SK-MEL-5 (cell line): ENCODE measurements at regions of chr6 and their contacts with region 1.

Region 1: DNA sequence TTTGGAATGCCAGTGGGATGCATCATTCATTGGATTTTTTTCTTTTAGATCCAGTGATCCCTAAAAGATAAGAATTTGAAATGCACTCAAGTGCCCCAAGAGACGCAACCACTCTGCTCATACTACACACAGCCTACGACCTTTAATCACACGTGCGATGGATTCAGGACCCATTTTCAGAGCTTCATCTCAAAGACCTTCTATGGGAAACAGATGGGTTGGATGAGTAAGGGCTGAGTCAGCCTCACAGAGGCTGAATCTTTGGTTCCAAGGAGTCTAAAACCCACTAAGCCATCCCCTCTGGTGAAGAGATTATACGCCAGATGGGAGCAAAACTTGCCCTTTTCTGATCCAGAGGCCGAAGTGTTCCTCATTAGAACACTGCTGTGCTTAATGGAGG is 265.6 kb upstream of the EXOC2 start:
- DNase-seq: no peak

Region 2: DNA sequence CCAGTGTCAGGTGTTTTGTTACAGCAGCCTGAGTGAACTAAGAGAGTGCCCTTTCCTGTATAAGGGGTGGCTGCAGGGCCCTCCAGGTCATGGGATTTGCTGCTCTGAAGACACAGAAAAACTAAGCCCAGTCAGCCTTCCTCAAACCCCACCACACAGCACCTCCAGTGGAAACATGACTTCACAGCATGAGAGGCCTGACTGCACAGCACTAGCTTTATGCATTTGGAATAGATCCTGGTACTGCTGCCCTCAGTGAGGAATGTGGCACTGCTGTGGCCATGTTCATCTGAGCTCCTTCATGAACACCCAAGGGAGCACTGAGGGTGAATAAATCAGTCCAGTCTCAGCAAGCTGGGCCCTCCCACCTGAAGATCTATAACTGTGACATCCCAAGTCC is 57.3 kb after region 1 on chr6:
- in situ Hi-C with region 1: loop called (anchors 10 kb)
- DNase-seq: peak; percentile 71